Calu3 (cell line): ENCODE measurements at regions of chr10 and their contacts with region 1.

Region 1: GRCh38 chr10:120580918-120581895 is 124.2 kb downstream of the PLPP4 start:
- DNase-seq: peak; percentile 19
- H3K4me3 Mint-ChIP-seq: no peak overlapping the region
- H3K27ac Mint-ChIP-seq: peak overlapping the region; percentile 5
- H3K4me1 Mint-ChIP-seq: peaks cover 16% of the 10 kb centered on the region
- H3K27me3 Mint-ChIP-seq: peaks cover 7% of the 10 kb centered on the region
- CTCF ChIP-seq: no peak

Region 2: GRCh38 chr10:120735773-120736371 is 154.7 kb after region 1 on chr10:
- CTCF ChIA-PET with region 1: no interaction called
- intact Hi-C with region 1: loop called (anchors 10 kb)
- DNase-seq: no peak
- H3K4me3 Mint-ChIP-seq: no peak overlapping the region
- H3K27ac Mint-ChIP-seq: no peak overlapping the region
- H3K4me1 Mint-ChIP-seq: peaks cover 14% of the 10 kb centered on the region
- H3K27me3 Mint-ChIP-seq: peaks cover 25% of the 10 kb centered on the region
- CTCF ChIP-seq: peak; percentile 46